MCF 10A (cell line): ENCODE measurements at regions of chr9 and their contacts with region 1.

Region 1: DNA sequence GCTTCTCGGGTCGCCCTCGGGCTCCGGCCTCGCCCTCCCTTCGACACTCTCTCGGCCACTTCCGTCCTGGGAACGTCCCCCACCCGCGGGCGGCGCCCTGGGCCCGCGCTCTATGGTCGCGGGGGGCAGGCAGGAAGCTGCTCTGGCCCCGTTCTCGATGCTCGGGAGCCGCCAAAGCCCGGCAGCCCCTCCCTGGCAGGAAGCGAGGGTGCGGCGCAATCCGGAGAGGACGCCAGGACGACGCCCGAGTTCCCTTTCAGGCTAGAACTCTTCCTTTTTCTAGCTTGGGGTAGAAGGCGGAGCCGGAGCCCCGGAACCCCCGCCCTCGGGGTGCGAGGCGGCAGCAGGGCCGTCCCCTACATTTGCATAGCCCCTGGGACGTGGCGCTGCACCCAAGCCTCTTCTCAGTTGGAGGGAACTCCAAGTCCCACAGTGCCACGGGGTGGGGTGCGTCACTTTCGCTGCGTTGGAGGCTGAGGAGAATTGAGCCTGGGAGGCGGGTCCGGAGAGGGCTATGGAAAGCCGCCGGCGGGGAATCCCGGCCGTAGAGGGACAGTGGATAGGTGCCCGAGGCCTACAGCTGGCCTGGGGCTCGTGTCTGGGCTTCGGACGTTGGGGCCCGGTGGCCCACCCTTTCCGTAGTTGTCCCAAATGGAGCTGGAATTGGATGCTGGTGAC is at the starts of genes CREB3 and TLN1:
- DNase-seq: peak; percentile 99
- H3K4me3 Mint-ChIP-seq: no peak within 1 kb of the TSS
- H3K27ac Mint-ChIP-seq: no peak within 1 kb of the TSS
- H3K4me1 Mint-ChIP-seq: peaks cover 14% of the 10 kb centered on the region
- H3K27me3 Mint-ChIP-seq: no peaks in the 10 kb centered on the region
- CTCF ChIP-seq: no peak
- total RNA-seq, gene CREB3: 58.7 and 66.2 TPM in 2 replicates
- total RNA-seq, gene TLN1: 224 and 256 TPM in 2 replicates

Region 2: DNA sequence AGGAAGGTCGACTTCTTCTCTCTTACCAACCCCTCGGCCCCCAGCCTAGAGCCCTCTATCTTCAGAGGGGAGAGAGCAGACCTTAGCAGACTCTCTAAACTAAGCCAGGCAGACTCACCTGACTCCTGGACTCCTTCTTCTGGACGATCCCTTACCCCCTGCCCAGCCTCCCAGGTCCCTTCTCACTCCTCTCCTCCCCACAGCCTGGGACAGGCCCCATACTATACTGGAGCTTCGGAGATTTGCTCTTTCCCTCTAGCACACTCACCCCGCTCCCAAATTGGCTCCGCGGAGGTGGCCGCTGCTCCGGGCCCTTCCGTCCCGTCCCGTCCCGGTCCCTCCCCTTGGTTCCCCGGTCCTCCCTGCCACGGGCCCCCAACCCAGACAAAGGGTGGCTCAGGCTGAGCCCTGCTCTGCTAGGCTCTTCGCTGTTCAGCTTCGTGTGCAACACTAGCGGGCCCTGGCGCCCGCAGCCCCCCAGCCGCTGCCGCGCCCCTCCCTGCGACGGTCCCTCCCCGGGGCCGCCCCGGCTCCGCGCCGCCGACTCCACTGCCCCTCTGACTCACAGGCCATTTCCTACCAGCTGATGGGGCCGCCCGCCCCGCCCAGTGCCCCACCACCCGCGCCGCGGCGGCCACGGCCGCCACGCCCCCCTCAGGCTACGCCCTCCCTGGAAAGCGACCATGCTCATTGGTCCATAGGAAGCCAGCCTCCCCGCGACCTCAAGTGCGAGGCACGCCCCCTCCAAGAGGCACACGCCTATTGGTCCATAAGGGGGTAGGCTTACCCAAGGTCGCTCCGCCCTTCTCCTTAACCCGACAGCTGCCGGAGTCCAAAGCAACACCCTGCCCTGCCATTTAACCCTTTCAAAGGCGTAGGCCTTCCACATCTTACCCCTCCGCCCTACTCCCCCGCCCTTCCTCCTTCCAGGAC is 621.0 kb before region 1 on chr9:
- CTCF ChIA-PET with region 1: interaction called, 3 read pairs
- POLR2A ChIA-PET with region 1: interaction called, 4 read pairs
- intact Hi-C with region 1: loop called (anchors 5 kb)
- DNase-seq: peak; percentile 98
- H3K4me3 Mint-ChIP-seq: peak overlapping the region; percentile 87
- H3K27ac Mint-ChIP-seq: peak overlapping the region; percentile 96
- H3K4me1 Mint-ChIP-seq: peaks cover 50% of the 10 kb centered on the region
- H3K27me3 Mint-ChIP-seq: no peaks in the 10 kb centered on the region
- CTCF ChIP-seq: no peak

Region 3: DNA sequence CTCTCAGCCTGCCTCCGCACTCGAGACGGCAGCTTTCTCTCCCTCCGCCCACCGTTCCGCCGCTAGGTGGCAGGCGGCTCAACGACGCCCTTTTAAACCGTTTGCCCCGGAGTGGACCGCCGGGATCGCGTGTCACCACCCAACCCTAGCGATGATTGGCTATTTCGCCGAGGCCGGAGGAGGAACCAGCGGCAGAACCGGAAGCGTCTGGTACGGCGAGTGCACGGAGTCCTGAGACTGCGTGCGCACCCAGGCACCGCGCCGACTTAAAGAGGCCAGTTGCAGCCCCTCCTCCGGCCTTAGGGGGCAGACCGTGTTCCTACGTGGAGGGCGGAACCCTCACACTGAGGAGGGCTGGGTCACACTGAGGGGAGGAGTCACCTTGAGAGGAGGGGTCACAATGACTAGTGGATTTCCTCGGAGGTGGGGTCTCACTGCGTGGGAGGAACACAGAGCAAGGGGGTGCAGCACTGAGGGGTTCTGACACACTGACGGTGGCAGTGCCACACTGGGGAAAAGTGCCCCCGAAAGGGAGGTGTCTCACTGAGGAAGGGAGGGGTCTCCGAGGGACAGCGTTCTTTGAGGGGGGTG is 128.2 kb before region 1 on chr9:
- CTCF ChIA-PET with region 1: interaction called, 7 read pairs
- POLR2A ChIA-PET with region 1: interaction called, 11 read pairs
- intact Hi-C with region 1: loop called (anchors 1 kb)
- DNase-seq: peak; percentile 99
- H3K4me3 Mint-ChIP-seq: peak overlapping the region; percentile 97
- H3K27ac Mint-ChIP-seq: peak overlapping the region; percentile 99
- H3K4me1 Mint-ChIP-seq: peaks cover 28% of the 10 kb centered on the region
- H3K27me3 Mint-ChIP-seq: no peaks in the 10 kb centered on the region
- CTCF ChIP-seq: peak; percentile 69

Region 4: DNA sequence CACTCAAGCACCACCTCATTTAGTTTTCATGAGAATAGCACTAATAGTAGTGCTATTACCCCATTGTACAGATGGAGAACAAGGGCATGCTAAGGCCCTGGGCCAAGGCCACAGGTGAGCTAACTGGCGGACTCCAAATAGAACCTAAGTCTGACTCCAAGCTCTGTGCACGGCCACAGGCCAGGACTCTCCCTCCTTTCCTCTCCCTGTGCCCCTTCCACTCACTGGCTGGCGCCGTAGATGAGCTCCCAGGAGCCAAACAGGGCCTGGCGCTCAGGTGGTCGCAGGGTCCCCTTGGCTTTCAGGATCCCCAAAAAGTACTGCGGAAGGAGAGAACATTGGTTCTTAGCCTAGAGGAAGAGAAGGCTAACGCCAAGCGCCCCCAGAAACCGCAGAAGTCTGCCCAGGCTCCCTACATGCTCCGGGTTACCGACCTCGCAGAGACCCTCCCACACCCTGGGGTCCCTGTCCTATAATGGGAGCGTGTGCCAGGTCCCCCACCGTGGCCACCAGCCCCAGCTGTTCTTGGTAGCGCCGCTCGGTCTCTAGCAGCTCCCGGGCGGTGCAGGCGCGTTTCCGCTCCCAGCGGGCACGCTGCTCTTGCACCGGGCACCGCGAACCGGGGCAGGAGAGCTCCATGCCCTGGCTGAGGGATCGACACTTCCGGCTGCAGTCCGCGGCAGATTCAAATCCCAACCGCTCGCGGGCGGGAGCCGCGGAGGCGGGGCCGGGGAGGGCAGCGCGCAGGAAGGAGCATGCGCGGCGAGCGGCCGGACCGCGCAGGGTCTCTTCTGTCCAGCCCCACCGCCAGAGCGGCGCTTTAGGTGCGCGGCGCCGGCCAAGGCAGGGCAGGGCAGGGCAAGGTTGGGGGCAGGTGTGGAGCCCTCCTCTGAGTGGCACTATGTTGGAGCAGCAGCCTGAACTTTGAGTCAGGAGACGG is 67.5 kb before region 1 on chr9 and contains the start of gene ARHGEF39:
- CTCF ChIA-PET with region 1: interaction called, 119 read pairs
- POLR2A ChIA-PET with region 1: interaction called, 28 read pairs
- intact Hi-C with region 1: no loop called
- DNase-seq: peak; percentile 83
- H3K4me3 Mint-ChIP-seq: peak within 1 kb of the TSS; percentile 86
- H3K27ac Mint-ChIP-seq: no peak within 1 kb of the TSS
- H3K4me1 Mint-ChIP-seq: peaks cover 21% of the 10 kb centered on the region
- H3K27me3 Mint-ChIP-seq: no peaks in the 10 kb centered on the region
- CTCF ChIP-seq: no peak
- total RNA-seq, gene ARHGEF39: 2.9 and 5.1 TPM in 2 replicates

Region 5: GRCh38 chr9:35705836-35706430 is 26.3 kb before region 1 on chr9:
- CTCF ChIA-PET with region 1: interaction called, 14 read pairs
- POLR2A ChIA-PET with region 1: interaction called, 3 read pairs
- intact Hi-C with region 1: no loop called
- DNase-seq: no peak
- H3K4me3 Mint-ChIP-seq: no peak overlapping the region
- H3K27ac Mint-ChIP-seq: no peak overlapping the region
- H3K4me1 Mint-ChIP-seq: no peaks in the 10 kb centered on the region
- H3K27me3 Mint-ChIP-seq: no peaks in the 10 kb centered on the region
- CTCF ChIP-seq: no peak

Region 6: GRCh38 chr9:35774907-35775635 is 42.8 kb after region 1 on chr9:
- CTCF ChIA-PET with region 1: interaction called, 4 read pairs
- POLR2A ChIA-PET with region 1: interaction called, 13 read pairs
- intact Hi-C with region 1: no loop called
- DNase-seq: no peak
- H3K4me3 Mint-ChIP-seq: no peak overlapping the region
- H3K27ac Mint-ChIP-seq: no peak overlapping the region
- H3K4me1 Mint-ChIP-seq: no peaks in the 10 kb centered on the region
- H3K27me3 Mint-ChIP-seq: no peaks in the 10 kb centered on the region
- CTCF ChIP-seq: no peak

Region 7: GRCh38 chr9:35903049-35903448 is 170.8 kb after region 1 on chr9:
- CTCF ChIA-PET with region 1: interaction called, 3 read pairs
- POLR2A ChIA-PET with region 1: interaction called, 14 read pairs
- intact Hi-C with region 1: no loop called
- DNase-seq: peak; percentile 76
- H3K4me3 Mint-ChIP-seq: no peak overlapping the region
- H3K27ac Mint-ChIP-seq: no peak overlapping the region
- H3K4me1 Mint-ChIP-seq: peaks cover 25% of the 10 kb centered on the region
- H3K27me3 Mint-ChIP-seq: no peaks in the 10 kb centered on the region
- CTCF ChIP-seq: peak; percentile 60